CD14-positive monocyte (primary cell): ENCODE measurements at regions of chr17 and their contacts with region 1.

Region 1: DNA sequence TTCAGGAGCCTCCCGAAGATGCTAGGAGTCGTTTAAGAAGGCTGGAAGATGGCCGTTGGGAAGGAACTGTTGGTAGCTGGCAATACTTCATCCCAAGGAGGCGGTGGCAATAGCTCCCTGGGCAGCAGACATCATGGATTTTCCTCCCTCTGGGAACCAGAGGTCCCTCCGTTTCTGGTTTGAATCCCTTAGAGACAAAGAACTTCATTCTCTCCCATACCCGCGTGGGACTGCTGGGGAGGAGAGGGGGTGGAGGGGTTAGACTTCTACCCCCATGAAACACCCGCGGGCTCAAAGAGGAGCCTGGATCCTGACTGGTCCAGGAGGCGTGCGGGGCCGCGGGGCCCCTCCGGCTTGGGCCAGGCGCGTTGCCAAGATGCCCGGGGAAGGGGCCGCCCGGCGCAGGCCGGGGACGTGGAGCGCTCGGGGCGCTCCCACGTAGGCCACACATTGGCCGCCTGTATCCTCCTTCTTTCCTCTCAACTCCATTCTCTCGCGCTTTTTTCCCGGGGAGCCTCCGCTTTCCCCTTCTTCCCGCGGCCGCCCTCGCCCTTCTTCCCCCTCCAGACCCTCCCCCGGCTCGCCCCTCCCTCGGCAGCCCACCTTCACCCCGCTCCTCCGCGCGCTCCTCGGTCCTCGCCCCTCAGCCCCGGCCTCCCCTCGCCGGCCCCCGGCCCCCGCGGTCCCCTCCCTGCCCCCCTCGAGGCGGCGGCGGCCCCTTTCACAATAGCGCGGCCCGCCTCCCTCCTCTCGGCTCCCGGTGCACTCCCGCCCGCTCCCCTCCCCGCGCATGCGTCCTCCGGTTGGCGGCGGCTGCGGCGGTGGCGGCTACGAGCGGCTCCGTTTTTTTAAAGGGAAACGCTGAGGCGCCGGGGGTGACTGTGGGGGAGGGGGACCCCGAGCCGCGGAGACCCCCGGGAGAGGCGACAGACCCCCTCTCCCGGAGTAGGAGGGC is at the start of gene MSL1:
- DNase-seq: peak in 2 of 3 donors; percentile 70 to 75
- H3K4me3 ChIP-seq: peak within 1 kb of the TSS; percentile 72 to 98 (median 98)
- H3K4me3 Mint-ChIP-seq: peak within 1 kb of the TSS; percentile 79 to 88
- H3K27ac ChIP-seq: peak within 1 kb of the TSS; percentile 78 to 80
- H3K27ac Mint-ChIP-seq: peak within 1 kb of the TSS; percentile 10 to 87 (median 75)
- H3K4me1 ChIP-seq: peaks cover 30 to 49% of the 10 kb centered on the region in 2 donors
- H3K4me1 Mint-ChIP-seq: peaks cover 46% of the 10 kb centered on the region
- H3K27me3 ChIP-seq: no peaks in the 10 kb centered on the region
- H3K27me3 Mint-ChIP-seq: peaks cover 0 to 2% (median 0%) of the 10 kb centered on the region in 3 donors
- CTCF ChIP-seq: no peak
- polyA plus RNA-seq, gene MSL1: 10.0 to 89.2 (median 11.4) TPM

Region 2: DNA sequence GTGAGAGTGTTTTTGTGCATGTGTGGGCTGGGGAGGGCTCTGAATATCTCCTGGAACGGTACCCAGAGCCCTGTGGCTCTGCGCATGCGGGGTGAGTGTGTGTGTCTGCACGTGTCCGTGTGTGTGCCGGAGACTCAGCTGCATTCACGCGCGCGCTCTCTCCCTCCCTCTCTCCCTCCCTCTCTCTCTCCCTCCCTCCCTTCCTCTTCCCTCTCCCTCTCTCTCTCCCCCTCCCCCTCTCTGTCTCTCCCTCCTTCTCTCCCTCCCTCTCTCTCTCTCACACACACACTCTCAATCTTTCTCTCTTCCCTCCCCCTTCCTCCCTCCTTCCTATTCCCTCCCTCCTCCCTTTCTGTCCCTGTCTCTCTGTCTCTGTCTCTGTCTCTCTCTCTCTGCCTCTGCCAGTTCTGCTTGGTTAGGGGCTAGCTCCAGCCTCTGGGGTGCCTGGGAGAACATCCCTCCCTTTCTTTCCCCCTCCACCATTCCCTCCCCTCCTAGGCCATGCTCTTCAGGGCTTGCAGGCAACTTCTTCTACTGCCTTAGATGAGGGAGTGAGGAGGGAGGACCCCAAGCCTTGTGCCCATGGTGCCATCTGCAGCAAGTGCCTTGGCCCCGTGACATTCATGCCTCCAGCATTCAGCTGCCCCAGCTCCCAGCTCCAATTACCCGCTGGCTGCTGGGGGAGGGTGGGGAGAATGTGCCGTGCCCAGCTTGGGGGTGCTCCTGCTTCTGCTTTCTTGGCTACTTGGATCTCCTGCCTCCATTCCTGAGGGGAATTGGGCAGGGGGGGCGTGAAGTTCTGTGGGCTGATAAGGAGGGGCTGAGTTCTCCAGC is 52.3 kb before region 1 on chr17:
- intact Hi-C with region 1: no loop called
- DNase-seq: peak; percentile 48 to 59 (median 56)
- H3K4me3 ChIP-seq: peak overlapping the region; percentile 23 to 76 (median 37)
- H3K4me3 Mint-ChIP-seq: peak overlapping the region; percentile 85 to 96
- H3K27ac ChIP-seq: no peak overlapping the region
- H3K27ac Mint-ChIP-seq: peak overlapping the region; percentile 8 to 85 (median 68)
- H3K4me1 ChIP-seq: peaks cover 59 to 67% of the 10 kb centered on the region in 2 donors
- H3K4me1 Mint-ChIP-seq: peaks cover 75% of the 10 kb centered on the region
- H3K27me3 ChIP-seq: no peaks in the 10 kb centered on the region
- H3K27me3 Mint-ChIP-seq: peaks cover 0 to 2% (median 2%) of the 10 kb centered on the region in 3 donors
- CTCF ChIP-seq: no peak

Region 3: DNA sequence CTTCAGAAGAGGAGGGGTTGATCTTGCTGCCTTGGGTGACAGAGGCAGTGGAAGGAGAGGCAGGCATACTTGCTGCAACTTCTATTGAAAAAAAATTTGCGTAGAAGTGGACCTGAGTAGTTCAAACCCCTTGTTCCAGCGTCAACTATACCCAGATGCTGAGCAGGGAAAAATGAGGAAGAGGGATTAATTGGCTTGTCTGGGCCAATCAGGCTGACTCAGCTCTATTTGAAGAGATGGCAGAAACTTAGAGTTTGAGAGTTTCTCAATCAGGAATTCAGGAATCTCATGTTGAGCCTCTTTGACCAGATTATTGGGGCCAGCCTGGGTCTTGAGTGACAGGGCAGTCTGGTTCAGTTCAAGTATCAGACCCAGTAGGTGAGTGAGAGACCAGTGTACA is 36.5 kb after region 1 on chr17:
- intact Hi-C with region 1: loop called in 1 of 2 experiments (anchors 5 kb)
- DNase-seq: peak in 2 of 3 donors; percentile 59 to 64
- H3K4me3 ChIP-seq: peak overlapping the region in 1 of 3 experiments; percentile 7
- H3K4me3 Mint-ChIP-seq: no peak overlapping the region
- H3K27ac ChIP-seq: peak overlapping the region in 1 of 2 donors; percentile 58
- H3K27ac Mint-ChIP-seq: peak overlapping the region; percentile 26 to 90 (median 79)
- H3K4me1 ChIP-seq: peaks cover 21 to 22% of the 10 kb centered on the region in 2 donors
- H3K4me1 Mint-ChIP-seq: peaks cover 23% of the 10 kb centered on the region
- H3K27me3 ChIP-seq: no peaks in the 10 kb centered on the region
- H3K27me3 Mint-ChIP-seq: no peaks in the 10 kb centered on the region
- CTCF ChIP-seq: no peak

Region 4: DNA sequence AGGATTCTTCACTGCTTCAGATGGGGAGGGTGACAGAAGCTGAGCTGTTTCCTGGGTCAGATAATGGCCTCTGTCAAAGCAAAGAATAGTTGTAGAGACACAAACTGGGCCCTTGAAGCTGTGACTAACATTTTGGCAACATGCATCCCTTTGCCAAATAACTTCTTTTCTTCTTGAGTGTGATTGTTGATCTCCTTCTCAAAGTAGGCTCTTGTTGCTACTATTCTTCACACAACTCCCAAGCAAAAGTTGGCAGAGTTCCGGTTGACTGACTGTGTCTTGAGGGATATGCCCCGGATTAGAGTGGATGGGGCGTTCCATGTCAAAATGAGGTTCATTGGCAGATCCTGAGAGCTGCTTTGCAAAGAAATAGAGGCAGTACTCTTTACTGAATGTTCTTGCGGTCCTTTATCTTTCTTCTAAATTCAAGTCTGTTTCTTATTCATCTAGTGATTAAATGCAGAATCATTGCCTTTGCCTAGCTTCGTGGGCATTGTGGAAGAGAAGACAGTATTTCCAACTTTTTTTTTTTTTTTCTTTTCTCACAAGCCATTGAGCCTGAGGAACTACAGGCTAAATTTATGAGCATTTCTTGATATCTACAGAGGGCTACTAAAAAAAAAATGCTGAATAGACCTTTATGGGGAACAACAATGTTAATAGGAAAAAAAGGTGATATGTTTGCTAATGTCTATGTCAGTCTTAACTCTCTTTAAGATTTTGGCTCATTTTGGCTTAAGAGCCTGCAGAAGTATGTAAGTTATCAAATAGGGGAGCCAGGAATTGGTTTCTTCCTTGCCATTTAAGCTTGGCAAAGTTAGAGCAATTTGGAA is 103.5 kb after region 1 on chr17:
- intact Hi-C with region 1: no loop called
- DNase-seq: no peak
- H3K4me3 ChIP-seq: no peak overlapping the region
- H3K4me3 Mint-ChIP-seq: no peak overlapping the region
- H3K27ac ChIP-seq: no peak overlapping the region
- H3K27ac Mint-ChIP-seq: no peak overlapping the region
- H3K4me1 ChIP-seq: peaks cover 7 to 10% of the 10 kb centered on the region in 2 donors
- H3K4me1 Mint-ChIP-seq: peaks cover 16% of the 10 kb centered on the region
- H3K27me3 ChIP-seq: no peaks in the 10 kb centered on the region
- H3K27me3 Mint-ChIP-seq: no peaks in the 10 kb centered on the region
- CTCF ChIP-seq: no peak